ENCODE measurements at regions of chr1 and their contacts with region 1.

Region 1: DNA sequence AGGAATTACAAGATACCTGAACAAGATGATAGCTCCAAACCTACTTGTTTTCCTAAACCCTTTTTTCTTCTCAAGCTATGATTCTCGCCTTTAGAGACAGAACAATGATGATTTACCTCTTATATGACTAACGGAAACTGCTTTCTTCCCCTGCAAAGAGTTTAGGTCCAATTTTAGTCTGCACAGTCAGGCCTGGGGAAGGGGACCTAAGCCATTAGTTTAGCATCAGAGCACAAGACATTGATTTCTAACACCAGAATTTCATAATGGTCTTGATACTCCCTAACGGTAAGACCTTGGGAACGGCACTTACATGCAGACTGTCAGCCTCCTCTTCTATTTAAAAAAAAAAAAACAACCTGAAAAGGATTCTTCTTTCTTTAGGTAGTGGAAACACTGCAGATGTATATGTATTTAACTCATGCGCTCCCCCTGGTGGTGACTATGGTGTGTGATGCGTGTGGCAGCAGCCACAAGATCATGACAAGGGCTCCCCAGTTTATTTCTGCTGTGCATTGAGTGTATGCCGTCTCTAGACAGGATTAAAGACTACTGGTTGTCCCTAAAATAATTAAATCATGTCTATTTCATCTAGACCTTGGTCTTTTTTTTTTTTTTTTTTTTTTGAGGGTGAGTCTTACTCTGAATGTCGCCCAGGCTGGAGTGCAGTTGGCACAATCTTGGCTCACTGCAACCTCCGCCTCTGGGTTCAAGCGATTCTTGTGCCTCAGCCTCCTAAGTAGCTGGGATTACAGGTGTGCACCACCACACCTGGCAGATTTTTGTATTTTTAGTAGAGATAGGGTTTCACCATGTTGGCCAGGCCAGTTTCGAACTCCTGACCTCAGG is 37.3 kb upstream of the TMEM222 start:
- DNase-seq: peak; percentile 79 to 88
- ATAC-seq: peak; percentile 76 to 94 (median 88)
- H3K4me3 ChIP-seq: no peak overlapping the region
- H3K27ac ChIP-seq: no peak overlapping the region
- H3K4me1 ChIP-seq: no peaks in the 10 kb centered on the region
- H3K27me3 ChIP-seq: no peaks in the 10 kb centered on the region
- CTCF ChIP-seq: peak; percentile 88

Region 2: DNA sequence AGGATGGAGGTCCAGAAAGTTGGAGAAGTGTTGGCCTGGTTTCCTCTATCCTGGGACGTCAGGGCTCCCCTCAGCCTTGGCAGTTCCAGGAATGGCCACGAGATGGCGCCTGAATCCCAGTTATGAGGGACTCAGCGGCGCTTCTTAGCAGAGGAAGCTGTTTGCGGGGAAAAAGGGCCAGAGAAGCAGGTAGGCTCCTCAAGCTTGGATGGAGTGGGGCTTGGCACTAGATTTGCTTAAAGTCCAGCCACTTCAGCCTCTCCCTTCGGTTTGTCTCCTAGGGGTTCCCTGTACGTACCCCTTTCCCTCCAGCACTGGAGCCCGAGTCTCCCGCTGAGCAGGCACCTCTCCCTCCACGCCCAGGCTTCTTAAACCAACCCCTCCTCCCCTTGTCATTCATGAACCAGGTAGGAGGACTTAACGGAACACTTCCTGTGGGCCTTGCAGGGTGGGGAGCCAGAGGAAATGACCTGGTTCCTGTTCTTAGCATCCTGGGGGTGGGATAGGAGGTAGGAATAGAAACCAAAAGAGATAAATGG is 240.0 kb before region 1 on chr1:
- intact Hi-C with region 1: loop called in 1 of 2 experiments (anchors 2 kb)
- DNase-seq: peak; percentile 86 to 92
- ATAC-seq: peak; percentile 88 to 97 (median 94)
- H3K4me3 ChIP-seq: no peak overlapping the region
- H3K27ac ChIP-seq: no peak overlapping the region
- H3K4me1 ChIP-seq: no peaks in the 10 kb centered on the region
- H3K27me3 ChIP-seq: no peaks in the 10 kb centered on the region
- CTCF ChIP-seq: peak; percentile 99

Region 3: DNA sequence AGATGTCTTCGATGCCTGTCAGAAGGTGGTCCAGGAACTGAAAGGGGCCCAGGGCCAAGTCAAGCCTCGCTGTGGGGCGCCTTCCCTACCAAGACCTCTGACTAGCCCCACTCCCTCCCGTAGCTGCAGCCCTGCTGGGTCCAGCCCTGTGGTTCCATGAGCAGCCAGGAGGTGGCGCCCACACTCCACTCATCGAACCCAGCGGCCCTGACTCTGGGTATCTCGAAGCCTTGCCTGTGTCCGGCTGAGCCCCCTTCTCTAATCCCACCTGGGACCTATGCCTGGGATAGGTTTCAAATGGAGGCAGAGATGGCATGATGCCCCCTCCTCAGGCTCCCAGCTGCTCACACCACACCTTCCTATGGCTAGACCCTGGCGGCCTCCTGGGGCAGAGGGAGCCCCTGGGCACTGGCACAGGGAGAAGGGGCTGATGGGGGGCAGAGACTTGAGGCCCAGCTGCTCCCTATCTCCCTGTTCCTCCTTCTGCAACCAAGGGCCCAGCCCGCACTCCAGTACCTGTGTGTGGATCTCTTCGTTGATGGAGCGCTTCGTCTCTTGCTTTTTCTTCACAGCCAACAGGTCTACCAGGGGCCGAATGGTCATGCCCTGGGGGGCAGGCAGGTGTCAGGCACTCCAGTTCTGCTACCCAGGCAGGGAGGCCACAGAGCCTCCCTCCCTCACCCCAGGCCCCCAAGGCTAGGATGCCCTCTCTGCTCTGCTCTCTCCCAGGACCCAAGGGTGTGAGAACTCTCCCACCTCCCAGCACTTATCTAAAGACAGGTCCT is 181.8 kb before region 1 on chr1:
- intact Hi-C with region 1: loop called (anchors 1 to 2 kb)
- DNase-seq: peak; percentile 75 to 86
- ATAC-seq: peak; percentile 78 to 90 (median 86)
- H3K4me3 ChIP-seq: no peak overlapping the region
- H3K27ac ChIP-seq: no peak overlapping the region
- H3K4me1 ChIP-seq: no peaks in the 10 kb centered on the region
- H3K27me3 ChIP-seq: no peaks in the 10 kb centered on the region
- CTCF ChIP-seq: peak; percentile 98

Region 4: GRCh38 chr1:27192039-27192529 is 92.6 kb before region 1 on chr1:
- intact Hi-C with region 1: loop called in 1 of 2 experiments (anchors 10 kb)
- DNase-seq: no peak
- ATAC-seq: no peak
- H3K4me3 ChIP-seq: no peak overlapping the region
- H3K27ac ChIP-seq: no peak overlapping the region
- H3K4me1 ChIP-seq: no peaks in the 10 kb centered on the region
- H3K27me3 ChIP-seq: no peaks in the 10 kb centered on the region
- CTCF ChIP-seq: no peak

Region 5: GRCh38 chr1:27203946-27204345 is 80.7 kb before region 1 on chr1:
- intact Hi-C with region 1: loop called (anchors 2 to 10 kb)
- DNase-seq: no peak
- ATAC-seq: no peak
- H3K4me3 ChIP-seq: no peak overlapping the region
- H3K27ac ChIP-seq: no peak overlapping the region
- H3K4me1 ChIP-seq: no peaks in the 10 kb centered on the region
- H3K27me3 ChIP-seq: no peaks in the 10 kb centered on the region
- CTCF ChIP-seq: no peak

Measured in psoas muscle (tissue), 8 donors.